ENCODE measurements at regions of chr6 and their contacts with region 1.

Region 1: DNA sequence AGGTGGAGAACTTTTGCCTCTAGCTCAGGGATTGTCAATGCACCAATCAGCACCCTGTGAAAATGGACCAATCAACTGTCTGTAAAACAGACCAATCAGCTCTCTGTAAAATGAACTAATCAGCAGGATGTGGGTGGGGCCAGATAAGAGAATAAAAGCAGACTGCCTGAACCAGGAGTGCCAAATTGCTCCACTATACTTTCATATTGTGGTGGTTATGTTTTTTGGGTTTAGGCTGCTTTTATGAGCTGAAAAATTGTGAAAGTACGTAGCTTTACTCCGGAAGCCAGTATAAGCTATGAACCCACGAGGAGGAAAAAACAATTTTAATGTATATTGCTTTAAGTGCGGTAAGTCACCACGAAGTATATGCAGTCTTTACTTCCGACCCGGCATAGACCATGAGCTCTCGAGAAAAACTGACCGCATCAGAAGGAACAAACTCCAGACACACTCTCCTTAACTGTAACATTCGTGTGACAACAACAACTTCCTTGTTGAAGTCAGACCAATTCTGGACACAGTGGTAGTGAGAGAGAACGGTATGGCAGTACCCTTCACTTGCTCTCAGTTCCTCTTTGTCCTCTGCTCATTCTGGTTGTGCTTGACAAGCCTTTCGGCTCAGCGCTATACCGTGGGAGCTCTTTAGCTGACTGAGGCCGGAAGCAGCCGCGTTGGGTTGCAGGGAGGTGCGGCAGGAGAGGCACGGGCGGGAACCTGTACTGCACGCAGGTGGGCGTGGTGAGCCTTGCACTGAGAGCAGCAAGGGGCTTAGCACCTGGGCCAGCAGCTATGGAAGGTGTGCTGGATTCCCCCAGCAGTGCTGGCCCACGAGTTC is 81.9 kb upstream of the E2F3 start:
- DNase-seq: peak; percentile 84
- H3K4me3 Mint-ChIP-seq: peak overlapping the region; percentile 83
- H3K27ac Mint-ChIP-seq: peak overlapping the region; percentile 96
- H3K4me1 Mint-ChIP-seq: peaks cover 15% of the 10 kb centered on the region
- H3K27me3 Mint-ChIP-seq: no peaks in the 10 kb centered on the region

Region 2: GRCh38 chr6:20291764-20292580 is 27.8 kb before region 1 on chr6:
- CTCF ChIA-PET with region 1: interaction called, 11 read pairs
- POLR2A ChIA-PET with region 1: no interaction called
- intact Hi-C with region 1: no loop called
- DNase-seq: peak; percentile 85
- H3K4me3 Mint-ChIP-seq: no peak overlapping the region
- H3K27ac Mint-ChIP-seq: no peak overlapping the region
- H3K4me1 Mint-ChIP-seq: peaks cover 7% of the 10 kb centered on the region
- H3K27me3 Mint-ChIP-seq: no peaks in the 10 kb centered on the region

Region 3: GRCh38 chr6:20334334-20334733 is 14.6 kb after region 1 on chr6:
- CTCF ChIA-PET with region 1: interaction called, 4 read pairs
- POLR2A ChIA-PET with region 1: interaction called, 8 read pairs
- intact Hi-C with region 1: loop called (anchors 1 kb)
- DNase-seq: peak; percentile 14
- H3K4me3 Mint-ChIP-seq: no peak overlapping the region
- H3K27ac Mint-ChIP-seq: no peak overlapping the region
- H3K4me1 Mint-ChIP-seq: peaks cover 18% of the 10 kb centered on the region
- H3K27me3 Mint-ChIP-seq: no peaks in the 10 kb centered on the region

Region 4: DNA sequence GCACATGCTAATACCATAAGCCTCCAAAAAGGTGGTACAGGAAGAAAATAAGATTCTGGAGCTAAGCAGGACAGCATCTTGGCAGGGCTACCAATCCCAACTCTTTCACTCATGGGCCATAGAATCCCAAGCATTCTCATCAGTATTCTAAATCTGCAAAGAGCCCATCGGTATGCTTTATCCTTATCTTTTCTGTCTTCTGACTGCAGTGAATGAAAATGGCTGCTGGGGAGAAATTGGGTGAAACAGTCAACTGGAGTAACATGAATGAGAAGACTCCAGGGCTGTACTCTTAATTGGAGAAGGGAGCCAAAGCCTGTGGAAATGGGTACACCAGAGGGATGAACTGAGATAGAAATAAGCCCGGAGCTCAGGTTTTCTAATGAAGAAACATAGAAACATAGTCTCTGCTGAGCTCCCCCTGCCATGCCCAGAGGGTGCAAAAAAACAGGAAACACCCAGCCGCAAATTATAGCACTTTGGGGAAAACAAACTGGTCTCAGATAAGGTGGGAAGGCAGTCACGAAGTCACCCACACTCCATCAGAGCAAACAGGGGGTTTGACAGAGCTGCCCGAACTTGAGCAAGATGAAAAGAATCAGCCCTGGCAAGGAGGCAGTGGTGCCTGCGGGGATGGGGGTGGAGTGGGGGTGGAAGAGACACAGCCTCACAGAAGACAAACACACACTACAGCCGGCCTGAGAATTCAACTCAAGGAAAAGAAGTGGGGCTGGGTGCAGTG is 46.5 kb after region 1 on chr6:
- CTCF ChIA-PET with region 1: no interaction called
- POLR2A ChIA-PET with region 1: no interaction called
- intact Hi-C with region 1: loop called (anchors 2 kb)
- DNase-seq: peak; percentile 45
- H3K4me3 Mint-ChIP-seq: peak overlapping the region; percentile 45
- H3K27ac Mint-ChIP-seq: peak overlapping the region; percentile 83
- H3K4me1 Mint-ChIP-seq: peaks cover 53% of the 10 kb centered on the region
- H3K27me3 Mint-ChIP-seq: no peaks in the 10 kb centered on the region

Measured in activated CD4-positive, alpha-beta memory T cell treated with anti-CD3 and anti-CD28 coated beads for 36 hours (primary cell).